Body of pancreas (tissue), 4 donors: ENCODE measurements at regions of chr16 and their contacts with region 1.

Region 1: DNA sequence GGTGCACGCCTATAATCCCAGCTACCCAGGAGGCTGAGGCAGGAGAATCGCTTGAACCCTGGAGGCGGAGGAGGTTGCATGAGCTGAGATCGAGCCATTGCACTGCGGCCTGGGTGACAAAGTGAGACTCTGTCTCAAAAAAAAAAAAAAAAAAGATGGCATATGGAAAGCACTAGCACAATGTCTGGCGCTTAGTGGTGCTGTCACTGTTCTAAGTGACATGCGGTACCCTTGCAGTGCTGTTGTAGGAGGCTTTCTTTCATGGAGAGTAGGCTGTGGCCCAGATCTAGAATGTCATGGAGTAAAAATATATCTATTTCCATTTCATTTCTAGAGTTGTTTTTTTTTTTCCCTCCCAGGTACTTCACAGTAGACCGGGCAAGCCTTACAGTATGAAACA is 14.6 kb upstream of the METTL9 start:
- DNase-seq: no peak
- ATAC-seq: no peak
- H3K4me3 ChIP-seq: no peak overlapping the region
- H3K27ac ChIP-seq: no peak overlapping the region
- H3K4me1 ChIP-seq: no peaks in the 10 kb centered on the region
- H3K27me3 ChIP-seq: no peaks in the 10 kb centered on the region
- CTCF ChIP-seq: no peak
- POLR2A ChIP-seq: no peak

Region 2: DNA sequence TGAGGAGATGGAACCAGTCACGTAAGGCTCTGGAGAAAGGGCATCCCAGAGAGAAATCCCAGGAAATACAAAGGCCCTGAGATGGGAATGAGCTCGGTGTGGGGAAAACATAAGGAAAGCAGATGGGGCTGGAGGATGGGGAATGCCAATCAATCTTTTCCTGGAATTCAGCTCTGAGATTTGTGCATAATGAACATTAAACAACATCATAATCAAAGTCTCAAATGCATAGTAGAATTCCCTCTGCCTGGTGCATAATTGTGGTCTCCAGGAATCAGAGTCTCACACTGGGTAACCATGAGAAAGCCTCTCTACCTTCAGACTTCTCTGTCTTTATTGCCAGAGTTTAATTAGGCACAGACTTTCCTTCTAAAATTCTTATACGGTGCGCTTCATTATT is 109.8 kb after region 1 on chr16:
- intact Hi-C with region 1: no loop called
- DNase-seq: no peak
- ATAC-seq: no peak
- H3K4me3 ChIP-seq: no peak overlapping the region
- H3K27ac ChIP-seq: no peak overlapping the region
- H3K4me1 ChIP-seq: no peaks in the 10 kb centered on the region
- H3K27me3 ChIP-seq: no peaks in the 10 kb centered on the region
- CTCF ChIP-seq: no peak
- POLR2A ChIP-seq: no peak

Region 3: DNA sequence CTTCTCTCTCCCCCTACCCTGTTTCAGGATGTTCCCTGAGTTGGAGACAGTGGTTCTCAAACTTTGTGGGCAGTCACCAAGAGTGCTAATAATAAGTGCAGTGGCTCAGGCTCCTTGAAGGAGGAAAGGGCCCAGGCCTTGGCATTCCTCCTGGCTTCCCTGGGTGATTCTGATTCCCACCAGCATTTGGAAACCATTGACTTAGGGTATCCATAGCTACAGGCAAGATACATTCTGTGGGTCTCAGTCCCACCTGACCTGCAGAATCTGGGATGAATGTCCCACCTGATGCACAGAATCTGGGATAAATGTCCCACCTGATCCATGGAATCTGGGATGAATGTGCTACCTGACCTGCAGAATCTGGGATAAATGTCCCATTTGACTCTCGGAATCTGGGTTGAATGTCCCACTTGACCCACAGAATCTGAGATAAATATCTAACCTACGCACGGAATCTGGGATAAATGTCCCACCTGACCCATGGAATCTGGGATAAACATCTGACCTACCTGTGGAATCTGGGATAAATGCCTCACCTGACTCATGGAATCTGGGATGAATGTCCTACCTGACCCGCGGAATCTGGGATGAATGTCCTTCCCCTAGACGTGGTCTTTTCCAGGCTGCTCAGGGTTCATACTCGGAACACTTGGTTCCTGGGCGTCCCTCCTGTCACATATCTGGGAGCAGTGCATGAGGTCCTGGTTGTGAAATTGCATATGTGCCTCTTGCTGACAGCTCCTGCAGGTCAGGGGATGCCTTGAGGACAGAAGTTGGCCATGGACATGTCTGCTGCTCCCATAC is 1092.4 kb after region 1 on chr16:
- intact Hi-C with region 1: loop called (anchors 5 kb)
- DNase-seq: no peak
- ATAC-seq: no peak
- H3K4me3 ChIP-seq: no peak overlapping the region
- H3K27ac ChIP-seq: no peak overlapping the region
- H3K4me1 ChIP-seq: no peaks in the 10 kb centered on the region
- H3K27me3 ChIP-seq: no peaks in the 10 kb centered on the region
- CTCF ChIP-seq: no peak
- POLR2A ChIP-seq: no peak

Region 4: GRCh38 chr16:22692916-22693637 is 1108.3 kb after region 1 on chr16:
- intact Hi-C with region 1: loop called (anchors 2 kb)
- DNase-seq: no peak
- ATAC-seq: peak; percentile 25
- H3K4me3 ChIP-seq: no peak overlapping the region
- H3K27ac ChIP-seq: no peak overlapping the region
- H3K4me1 ChIP-seq: no peaks in the 10 kb centered on the region
- H3K27me3 ChIP-seq: no peaks in the 10 kb centered on the region
- CTCF ChIP-seq: no peak
- POLR2A ChIP-seq: no peak